Esophagus squamous epithelium (tissue), 5 donors: ENCODE measurements at regions of chr1 and their contacts with region 1.

Region 1: DNA sequence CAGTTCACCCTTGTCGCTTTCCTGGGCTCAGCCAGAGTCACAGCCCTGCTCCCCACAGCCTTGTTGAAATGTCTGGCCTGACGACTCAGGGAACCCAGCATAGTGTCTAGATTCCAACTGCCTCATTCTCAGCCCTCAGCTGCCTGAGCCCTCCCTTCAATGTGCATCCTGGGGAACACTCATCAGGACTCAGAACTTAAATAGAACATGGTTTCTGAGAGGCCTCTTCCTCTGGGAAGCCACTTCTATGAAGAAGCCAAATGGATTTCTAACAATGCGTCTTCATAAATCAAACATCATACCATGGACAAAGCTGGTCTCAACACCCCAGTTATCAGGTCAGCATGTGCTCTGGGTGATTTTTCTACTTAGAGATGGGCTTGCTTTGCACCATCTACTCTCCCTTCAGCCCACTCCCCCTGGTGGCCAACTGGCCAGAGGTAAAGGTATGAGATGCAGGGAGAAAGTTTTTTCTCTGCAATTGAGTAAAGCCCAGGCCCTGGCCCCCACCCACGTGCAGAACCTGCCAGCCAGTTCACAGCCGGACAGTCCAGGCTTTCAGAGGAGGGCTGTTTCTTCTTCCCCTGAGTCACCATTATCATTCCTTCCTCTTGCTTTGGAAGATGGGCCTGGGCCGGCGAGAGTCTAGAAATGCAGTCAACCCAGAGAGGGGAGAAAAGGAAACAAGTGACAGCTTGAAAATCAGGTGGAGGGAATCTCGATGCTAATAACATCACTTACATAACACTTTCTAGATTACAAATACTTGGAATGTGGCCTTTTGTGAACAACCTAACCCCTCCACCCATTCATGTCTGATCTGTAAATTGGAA is 32.1 kb downstream of the CD244 start:
- DNase-seq: no peak
- H3K4me3 ChIP-seq: no peak overlapping the region
- H3K27ac ChIP-seq: no peak overlapping the region
- H3K4me1 ChIP-seq: no peaks in the 10 kb centered on the region
- H3K27me3 ChIP-seq: no peaks in the 10 kb centered on the region
- CTCF ChIP-seq: peak; percentile 58 to 77 (median 70)
- POLR2A ChIP-seq: no peak

Region 2: DNA sequence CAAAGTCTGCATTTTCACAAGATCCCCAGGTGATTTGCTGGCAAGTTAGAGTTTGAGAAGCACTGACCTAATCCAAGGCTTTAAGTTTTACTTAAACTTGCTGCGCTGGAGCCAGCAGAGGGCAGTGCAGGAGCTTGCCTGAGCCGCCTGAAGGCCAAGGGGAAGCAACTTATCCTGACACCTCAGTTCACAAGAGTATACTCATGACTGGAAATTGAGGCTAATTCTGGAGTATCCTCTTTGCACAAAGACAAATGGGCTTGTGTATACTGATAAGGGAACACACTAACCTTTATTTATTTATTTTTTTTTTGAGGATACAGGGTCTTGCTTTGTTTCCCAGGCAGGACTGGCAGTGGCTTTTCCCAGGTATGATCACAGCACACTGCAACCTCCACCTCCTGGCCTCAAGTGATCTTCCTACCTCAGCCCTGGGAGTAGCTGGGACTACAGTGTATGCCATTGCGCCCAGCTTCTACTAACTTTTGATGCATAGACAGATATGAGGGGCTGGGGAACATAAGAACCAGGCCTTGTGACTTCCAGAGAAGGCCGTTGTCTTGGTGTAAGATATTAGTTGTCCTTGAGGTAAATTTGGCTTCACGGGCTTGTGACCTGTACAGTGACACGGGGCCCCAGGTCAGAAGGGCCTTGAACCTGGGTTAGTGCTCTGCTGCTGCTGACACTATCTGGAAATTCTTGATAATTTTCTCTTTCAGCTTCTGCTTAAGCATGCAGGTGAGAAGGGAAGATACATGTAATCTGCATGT is 154.7 kb before region 1 on chr1:
- intact Hi-C with region 1: loop called (anchors 10 kb)
- DNase-seq: no peak
- H3K4me3 ChIP-seq: no peak overlapping the region
- H3K27ac ChIP-seq: peak overlapping the region in 1 of 4 donors; percentile 39
- H3K4me1 ChIP-seq: peaks cover 4 to 30% (median 10%) of the 10 kb centered on the region in 3 donors
- H3K27me3 ChIP-seq: peaks cover 0 to 11% (median 0%) of the 10 kb centered on the region in 4 donors
- CTCF ChIP-seq: peak; percentile 57 to 78 (median 64)
- POLR2A ChIP-seq: no peak

Region 3: DNA sequence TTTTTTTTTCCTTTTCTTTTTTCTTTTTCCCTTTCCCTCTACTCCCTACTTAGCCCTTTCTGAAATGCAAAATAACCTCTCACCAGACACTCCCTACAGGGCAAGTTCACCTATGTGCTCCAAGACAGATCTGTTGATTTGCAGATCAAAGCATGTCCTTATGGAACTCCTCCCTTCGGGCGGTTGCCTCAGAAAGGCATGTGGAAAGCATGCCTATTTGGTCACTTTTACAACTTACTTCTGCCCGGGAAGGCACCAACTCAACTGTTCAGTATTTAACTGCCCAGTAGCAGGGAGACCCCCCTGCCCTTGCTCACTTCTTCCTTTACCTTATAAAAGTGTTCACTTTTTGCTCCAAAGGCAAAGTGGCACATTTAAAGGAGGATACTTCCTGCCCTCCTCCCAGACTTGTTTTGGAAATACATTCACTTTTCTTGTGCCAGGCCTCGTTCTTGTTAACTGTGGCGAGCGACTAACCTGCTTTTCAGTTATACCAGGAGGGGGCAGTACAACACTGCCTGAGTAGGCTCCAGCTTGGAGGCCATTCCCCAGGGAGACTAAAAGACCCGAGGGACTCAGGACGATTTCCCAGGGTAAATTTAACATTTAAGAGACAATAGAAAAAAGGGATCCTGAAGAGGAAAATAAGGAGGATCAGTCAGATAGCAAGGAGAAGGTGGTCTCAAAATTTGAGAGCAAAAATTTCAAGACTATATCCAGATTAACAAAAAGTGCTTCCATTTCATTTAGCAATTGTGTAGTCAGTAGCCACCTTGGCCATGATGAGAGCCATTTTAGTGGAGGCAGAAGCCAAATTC is 103.8 kb before region 1 on chr1:
- intact Hi-C with region 1: loop called (anchors 10 kb)
- DNase-seq: no peak
- H3K4me3 ChIP-seq: no peak overlapping the region
- H3K27ac ChIP-seq: peak overlapping the region; percentile 61 to 82 (median 70)
- H3K4me1 ChIP-seq: peaks cover 17 to 62% (median 25%) of the 10 kb centered on the region in 3 donors
- H3K27me3 ChIP-seq: no peaks in the 10 kb centered on the region
- CTCF ChIP-seq: peak; percentile 80 to 95 (median 87)
- POLR2A ChIP-seq: no peak

Region 4: GRCh38 chr1:160777486-160778089 is 52.9 kb before region 1 on chr1:
- intact Hi-C with region 1: loop called (anchors 5 kb)
- DNase-seq: no peak
- H3K4me3 ChIP-seq: no peak overlapping the region
- H3K27ac ChIP-seq: no peak overlapping the region
- H3K4me1 ChIP-seq: peaks cover 14 to 30% (median 19%) of the 10 kb centered on the region in 3 donors
- H3K27me3 ChIP-seq: no peaks in the 10 kb centered on the region
- CTCF ChIP-seq: peak in 5 of 6 experiments; percentile 49 to 80 (median 71)
- POLR2A ChIP-seq: no peak

Region 5: GRCh38 chr1:160951443-160952128 is 121.0 kb after region 1 on chr1:
- intact Hi-C with region 1: loop called (anchors 10 kb)
- DNase-seq: no peak
- H3K4me3 ChIP-seq: no peak overlapping the region
- H3K27ac ChIP-seq: peak overlapping the region; percentile 73 to 86 (median 74)
- H3K4me1 ChIP-seq: peaks cover 10 to 35% (median 14%) of the 10 kb centered on the region in 3 donors
- H3K27me3 ChIP-seq: peaks cover 0 to 6% (median 0%) of the 10 kb centered on the region in 4 donors
- CTCF ChIP-seq: peak; percentile 27 to 83 (median 64)
- POLR2A ChIP-seq: no peak

Region 6: DNA sequence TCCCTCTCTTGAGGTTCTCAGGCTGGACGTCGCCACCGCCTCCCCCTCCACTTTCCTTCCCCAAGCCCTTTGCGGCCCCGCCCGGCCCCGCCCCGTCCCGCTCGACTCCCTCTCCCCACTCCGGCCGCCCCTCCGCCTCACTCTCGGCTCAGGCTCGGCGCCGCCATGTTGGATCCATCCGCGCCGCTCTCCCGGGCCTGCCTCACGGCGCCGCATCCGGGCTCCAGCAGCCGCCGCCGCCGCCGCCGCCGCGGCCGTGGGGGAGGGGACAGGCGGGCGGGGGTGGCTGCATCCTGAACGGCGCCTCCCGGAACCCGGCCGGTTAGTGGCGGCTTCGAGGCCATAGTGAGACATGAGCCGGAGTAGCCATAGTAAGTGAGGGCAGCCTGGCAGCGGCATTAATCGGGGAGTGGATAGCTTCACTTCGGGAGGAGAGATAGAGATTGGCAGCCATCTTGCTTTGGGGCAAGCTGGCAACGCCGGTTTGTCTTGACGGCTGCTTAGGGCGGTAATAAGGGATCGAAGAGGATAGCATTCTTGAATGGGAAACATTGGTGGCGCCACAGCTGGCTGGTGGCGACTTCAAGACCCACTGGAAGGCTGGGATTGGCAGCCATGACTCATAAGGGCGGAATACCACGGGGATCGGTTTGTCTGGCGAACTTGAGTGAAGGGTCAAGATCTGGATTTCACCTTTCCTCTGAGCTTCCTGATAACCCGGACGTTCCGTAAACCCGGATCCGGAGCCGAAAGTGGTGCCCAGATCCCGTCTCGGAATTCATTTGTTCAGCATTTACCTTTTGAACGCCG is 302.1 kb after region 1 on chr1 and contains the start of gene DEDD:
- intact Hi-C with region 1: loop called (anchors 10 kb)
- DNase-seq: peak; percentile 87
- H3K4me3 ChIP-seq: peak within 1 kb of the TSS; percentile 64 to 89 (median 80)
- H3K27ac ChIP-seq: peak within 1 kb of the TSS; percentile 93 to 98 (median 96)
- H3K4me1 ChIP-seq: peaks cover 22 to 60% (median 28%) of the 10 kb centered on the region in 3 donors
- H3K27me3 ChIP-seq: no peaks in the 10 kb centered on the region
- CTCF ChIP-seq: peak in 1 of 6 experiments; percentile 8
- POLR2A ChIP-seq: peak in 2 of 4 donors; percentile 51 to 70
- total RNA-seq, gene DEDD: 16.6 to 32.8 (median 27.2) TPM